Activated CD8-positive, alpha-beta T cell treated with anti-CD3 and anti-CD28 coated beads for 36 hours (primary cell): ENCODE measurements at regions of chr2 and their contacts with region 1.

Region 1: GRCh38 chr2:239143858-239144718 is 256.7 kb downstream of the HDAC4 start:
- DNase-seq: peak; percentile 44
- ATAC-seq: peak; percentile 88
- H3K4me3 Mint-ChIP-seq: no peak overlapping the region
- H3K27ac Mint-ChIP-seq: no peak overlapping the region
- H3K4me1 Mint-ChIP-seq: no peaks in the 10 kb centered on the region
- H3K27me3 Mint-ChIP-seq: no peaks in the 10 kb centered on the region
- CTCF ChIP-seq: peak; percentile 55

Region 2: GRCh38 chr2:238629064-238629463 is 515.0 kb before region 1 on chr2:
- CTCF ChIA-PET with region 1: no interaction called
- POLR2A ChIA-PET with region 1: no interaction called
- intact Hi-C with region 1: no loop called
- DNase-seq: no peak
- ATAC-seq: no peak
- H3K4me3 Mint-ChIP-seq: no peak overlapping the region
- H3K27ac Mint-ChIP-seq: no peak overlapping the region
- H3K4me1 Mint-ChIP-seq: no peaks in the 10 kb centered on the region
- H3K27me3 Mint-ChIP-seq: peaks cover 2% of the 10 kb centered on the region
- CTCF ChIP-seq: no peak

Region 3: GRCh38 chr2:238970553-238971081 is 173.5 kb before region 1 on chr2:
- CTCF ChIA-PET with region 1: no interaction called
- POLR2A ChIA-PET with region 1: no interaction called
- intact Hi-C with region 1: no loop called
- DNase-seq: peak; percentile 52
- ATAC-seq: peak; percentile 89
- H3K4me3 Mint-ChIP-seq: no peak overlapping the region
- H3K27ac Mint-ChIP-seq: no peak overlapping the region
- H3K4me1 Mint-ChIP-seq: no peaks in the 10 kb centered on the region
- H3K27me3 Mint-ChIP-seq: peaks cover 9% of the 10 kb centered on the region
- CTCF ChIP-seq: peak; percentile 97

Region 4: GRCh38 chr2:239171643-239172042 is 27.6 kb after region 1 on chr2:
- CTCF ChIA-PET with region 1: interaction called, 10 read pairs
- POLR2A ChIA-PET with region 1: no interaction called
- intact Hi-C with region 1: no loop called
- DNase-seq: no peak
- ATAC-seq: no peak
- H3K4me3 Mint-ChIP-seq: no peak overlapping the region
- H3K27ac Mint-ChIP-seq: no peak overlapping the region
- H3K4me1 Mint-ChIP-seq: peaks cover 2% of the 10 kb centered on the region
- H3K27me3 Mint-ChIP-seq: no peaks in the 10 kb centered on the region
- CTCF ChIP-seq: no peak

Region 5: GRCh38 chr2:239257511-239257937 is 113.4 kb after region 1 on chr2:
- CTCF ChIA-PET with region 1: interaction called, 4 read pairs
- POLR2A ChIA-PET with region 1: no interaction called
- intact Hi-C with region 1: loop called (anchors 10 kb)
- DNase-seq: peak; percentile 63
- ATAC-seq: peak; percentile 68
- H3K4me3 Mint-ChIP-seq: no peak overlapping the region
- H3K27ac Mint-ChIP-seq: peak overlapping the region; percentile 91
- H3K4me1 Mint-ChIP-seq: peaks cover 86% of the 10 kb centered on the region
- H3K27me3 Mint-ChIP-seq: no peaks in the 10 kb centered on the region
- CTCF ChIP-seq: no peak